ENCODE measurements at regions of chr14 and their contacts with region 1.

Region 1: GRCh38 chr14:75487155-75487671 is 35.1 kb upstream of the BATF start:
- DNase-seq: no peak
- H3K4me3 ChIP-seq: no peak overlapping the region
- H3K27ac ChIP-seq: no peak overlapping the region
- H3K27me3 ChIP-seq: no peaks in the 10 kb centered on the region
- CTCF ChIP-seq: no peak

Region 2: DNA sequence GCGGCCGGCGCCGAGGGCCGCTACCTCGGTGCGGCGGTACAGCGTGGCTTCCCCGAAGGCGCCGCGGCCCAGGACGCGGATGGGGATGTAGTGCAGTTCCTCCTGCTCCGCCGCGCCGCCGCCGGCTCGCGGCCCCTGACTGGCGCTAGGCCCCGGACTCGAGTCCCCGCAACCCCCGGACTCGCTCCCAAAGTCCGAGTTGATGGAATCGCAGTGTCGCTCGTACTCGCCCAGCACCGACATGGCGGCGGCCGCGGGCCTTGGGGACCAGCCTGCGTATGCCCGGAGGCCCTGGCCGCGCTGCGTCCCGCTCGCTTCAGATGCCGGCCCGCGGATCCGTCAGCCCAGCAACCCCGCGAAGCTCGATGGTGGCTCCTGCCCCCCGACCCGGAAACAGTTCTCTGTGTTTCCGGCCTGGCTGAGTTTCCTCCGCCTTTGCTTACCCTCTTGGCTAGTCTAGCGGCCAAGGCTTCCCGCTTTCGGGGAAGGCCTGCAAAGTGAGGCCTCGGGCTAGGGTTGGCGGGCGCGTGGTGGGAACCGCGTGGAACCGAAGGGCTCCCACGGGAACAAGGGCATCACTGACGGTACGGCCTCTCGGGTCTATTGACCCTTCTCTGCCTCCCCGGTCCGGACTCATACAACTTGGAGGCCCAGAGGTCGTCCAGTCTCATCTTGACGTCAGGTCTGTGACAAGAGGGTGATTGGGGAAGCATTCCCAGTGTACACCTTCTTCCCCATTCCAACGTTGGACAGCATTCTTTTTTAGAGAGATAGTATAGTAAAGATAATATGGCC is 360.3 kb before region 1 on chr14 and contains the start of gene NEK9:
- intact Hi-C with region 1: loop called (anchors 5 to 10 kb)
- DNase-seq: peak; percentile 89 to 96 (median 94)
- H3K4me3 ChIP-seq: peak within 1 kb of the TSS; percentile 53 to 98 (median 90)
- H3K27ac ChIP-seq: peak within 1 kb of the TSS; percentile 45 to 98 (median 92)
- H3K27me3 ChIP-seq: no peaks in the 10 kb centered on the region
- CTCF ChIP-seq: peak in 24 of 56 donors; percentile 11 to 59 (median 28)
- total RNA-seq, gene NEK9: 54.3 to 112 (median 74.8) TPM

Region 3: GRCh38 chr14:75132382-75133086 is 354.7 kb before region 1 on chr14:
- intact Hi-C with region 1: loop called (anchors 5 to 10 kb)
- DNase-seq: peak in 2 of 10 donors; percentile 44 to 59
- H3K4me3 ChIP-seq: peak overlapping the region in 1 of 59 donors; percentile 1
- H3K27ac ChIP-seq: peak overlapping the region in 56 of 59 donors; percentile 3 to 86 (median 67)
- H3K27me3 ChIP-seq: no peaks in the 10 kb centered on the region
- CTCF ChIP-seq: peak; percentile 62 to 94 (median 86)